Heart left ventricle (tissue), 16 donors: ENCODE measurements at regions of chr4 and their contacts with region 1.

Region 1: GRCh38 chr4:87679449-87680169 is 29.5 kb downstream of the DMP1 start:
- DNase-seq: peak in 4 of 5 donors; percentile 56 to 66 (median 60)
- ATAC-seq: peak; percentile 70 to 90 (median 80)
- H3K4me3 ChIP-seq: peak overlapping the region in 1 of 12 donors; percentile 9
- H3K27ac ChIP-seq: peak overlapping the region in 9 of 12 donors; percentile 18 to 63 (median 40)
- H3K4me1 ChIP-seq: peaks cover 0 to 21% (median 7%) of the 10 kb centered on the region in 12 donors
- H3K27me3 ChIP-seq: no peaks in the 10 kb centered on the region
- CTCF ChIP-seq: peak; percentile 71 to 91 (median 77)
- POLR2A ChIP-seq: no peak

Region 2: DNA sequence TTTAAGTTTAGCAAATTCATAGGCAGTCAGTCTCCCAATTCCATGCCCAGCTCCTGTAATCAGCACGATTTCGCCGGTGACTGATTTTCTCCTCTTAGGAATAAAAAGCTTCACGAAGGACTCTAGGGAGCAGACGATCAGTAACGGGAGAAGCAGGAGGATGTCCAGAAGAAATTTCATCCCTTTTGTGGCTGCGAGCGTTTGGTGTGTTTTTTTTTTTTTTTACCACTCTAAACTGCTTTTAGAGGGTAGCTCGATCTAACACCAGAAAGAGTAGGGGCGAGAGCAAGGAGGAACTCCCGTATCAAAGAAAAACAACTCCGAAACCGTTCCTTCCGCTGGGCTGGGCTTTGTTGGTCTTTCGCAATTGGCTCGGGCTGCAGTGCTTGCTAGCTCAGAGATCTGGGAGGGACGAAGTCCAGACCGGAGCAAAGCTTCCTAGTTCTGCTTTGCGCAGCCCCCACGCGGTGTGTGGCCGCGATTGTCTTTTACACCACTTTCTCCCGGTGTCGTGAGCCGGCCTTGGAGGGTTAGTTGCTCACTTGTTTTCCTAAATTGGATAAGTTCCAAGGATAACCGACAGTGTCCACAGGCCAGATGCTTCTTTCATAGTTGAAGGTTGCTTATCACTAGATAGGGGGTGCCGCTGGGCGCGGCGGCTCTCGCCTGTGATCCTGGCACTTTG is 288.6 kb before region 1 on chr4 and contains the start of gene HSD17B11:
- intact Hi-C with region 1: loop called in 1 of 10 experiments (anchors 10 kb)
- DNase-seq: peak; percentile 89 to 92 (median 91)
- ATAC-seq: peak; percentile 98 to 100 (median 100)
- H3K4me3 ChIP-seq: peak within 1 kb of the TSS; percentile 55 to 82 (median 70)
- H3K27ac ChIP-seq: peak within 1 kb of the TSS; percentile 73 to 94 (median 88)
- H3K4me1 ChIP-seq: peaks cover 0 to 43% (median 11%) of the 10 kb centered on the region in 12 donors
- H3K27me3 ChIP-seq: no peaks in the 10 kb centered on the region
- CTCF ChIP-seq: peak in 5 of 12 donors; percentile 10 to 41 (median 36)
- POLR2A ChIP-seq: peak in 1 of 2 donors; percentile 89
- total RNA-seq, gene HSD17B11: 6.6 to 28.0 (median 13.4) TPM

Region 3: DNA sequence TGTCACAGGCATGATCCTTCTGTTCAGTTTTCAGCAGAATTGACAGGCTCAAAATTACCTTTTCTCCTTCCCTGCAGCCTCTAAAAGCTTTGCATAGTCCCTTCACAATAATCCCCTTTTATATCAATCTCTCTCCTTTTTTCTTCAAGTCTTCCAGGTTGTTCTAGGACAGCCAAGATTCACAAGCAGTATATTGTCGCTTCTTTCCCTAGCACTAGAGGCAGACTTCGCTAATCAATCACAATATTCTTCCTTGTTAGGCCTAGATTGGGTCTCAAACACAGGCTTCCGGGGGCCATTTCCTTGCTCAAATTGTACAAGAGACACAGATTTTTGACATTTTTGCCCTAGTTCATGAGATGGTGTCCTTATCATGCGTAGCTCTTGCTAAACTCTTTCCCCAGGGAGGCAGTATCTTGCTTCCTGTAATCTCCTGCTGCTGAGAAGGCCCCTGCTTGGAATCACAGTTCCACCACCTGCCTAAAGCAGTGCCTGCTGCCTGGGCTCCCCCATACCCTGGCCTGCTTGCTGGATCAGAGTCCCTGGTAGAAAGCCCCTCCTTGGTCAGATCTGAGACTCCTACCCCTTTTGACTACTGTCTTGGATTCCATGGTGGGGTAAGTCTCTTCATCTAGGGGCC is 27.8 kb after region 1 on chr4:
- intact Hi-C with region 1: no loop called
- DNase-seq: no peak
- ATAC-seq: peak in 1 of 4 donors; percentile 45
- H3K4me3 ChIP-seq: no peak overlapping the region
- H3K27ac ChIP-seq: no peak overlapping the region
- H3K4me1 ChIP-seq: peaks cover 0 to 5% (median 0%) of the 10 kb centered on the region in 12 donors
- H3K27me3 ChIP-seq: no peaks in the 10 kb centered on the region
- CTCF ChIP-seq: no peak
- POLR2A ChIP-seq: no peak

Region 4: DNA sequence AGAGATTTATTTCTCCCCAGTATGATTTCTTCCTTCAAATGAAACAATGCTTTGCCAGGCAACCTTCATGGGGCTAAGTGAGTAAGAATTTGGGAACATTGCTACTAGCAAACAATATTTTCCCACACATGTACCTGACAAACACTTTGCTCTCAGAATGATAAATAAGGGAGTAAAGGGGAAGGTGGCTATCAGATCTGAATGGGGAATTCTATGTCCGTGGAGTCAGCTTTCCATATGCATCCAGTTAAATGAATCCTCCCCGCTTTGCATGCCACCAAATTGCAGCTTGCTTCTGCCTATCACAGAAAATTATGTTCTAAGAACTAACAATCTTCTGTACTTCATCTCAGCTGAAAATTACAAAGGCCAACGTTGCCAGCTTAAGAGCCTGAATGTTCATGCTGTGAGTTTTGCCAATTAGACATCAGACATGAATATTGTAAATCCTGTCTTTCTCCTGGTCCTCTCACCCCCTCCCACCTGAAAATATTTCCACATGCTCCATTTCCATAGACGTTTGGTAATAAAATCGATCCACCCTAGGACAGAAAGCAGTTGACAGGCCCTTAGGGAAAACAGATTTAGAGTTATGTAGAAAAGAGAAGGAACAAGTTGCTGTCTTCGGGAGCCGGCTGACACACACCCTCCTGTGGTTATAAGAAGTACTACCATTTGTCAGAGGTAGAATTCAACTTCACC is 159.4 kb after region 1 on chr4:
- intact Hi-C with region 1: loop called (anchors 2 kb)
- DNase-seq: no peak
- ATAC-seq: peak in 2 of 4 donors; percentile 39 to 49
- H3K4me3 ChIP-seq: no peak overlapping the region
- H3K27ac ChIP-seq: peak overlapping the region in 3 of 12 donors; percentile 13 to 47 (median 34)
- H3K4me1 ChIP-seq: peaks cover 0 to 27% (median 5%) of the 10 kb centered on the region in 12 donors
- H3K27me3 ChIP-seq: no peaks in the 10 kb centered on the region
- CTCF ChIP-seq: peak; percentile 66 to 84 (median 76)
- POLR2A ChIP-seq: no peak

Region 5: GRCh38 chr4:87973283-87974169 is 293.9 kb after region 1 on chr4:
- intact Hi-C with region 1: loop called in 8 of 10 experiments (anchors 5 to 10 kb)
- DNase-seq: peak; percentile 43 to 70 (median 52)
- ATAC-seq: peak in 3 of 4 donors; percentile 53 to 81 (median 76)
- H3K4me3 ChIP-seq: peak overlapping the region in 2 of 12 donors; percentile 11 to 13
- H3K27ac ChIP-seq: no peak overlapping the region
- H3K4me1 ChIP-seq: peaks cover 0 to 19% (median 0%) of the 10 kb centered on the region in 12 donors
- H3K27me3 ChIP-seq: peaks cover 0 to 21% (median 0%) of the 10 kb centered on the region in 9 donors
- CTCF ChIP-seq: peak; percentile 71 to 90 (median 82)
- POLR2A ChIP-seq: no peak